B cell (primary cell): ENCODE measurements at regions of chr2 and their contacts with region 1.

Region 1: DNA sequence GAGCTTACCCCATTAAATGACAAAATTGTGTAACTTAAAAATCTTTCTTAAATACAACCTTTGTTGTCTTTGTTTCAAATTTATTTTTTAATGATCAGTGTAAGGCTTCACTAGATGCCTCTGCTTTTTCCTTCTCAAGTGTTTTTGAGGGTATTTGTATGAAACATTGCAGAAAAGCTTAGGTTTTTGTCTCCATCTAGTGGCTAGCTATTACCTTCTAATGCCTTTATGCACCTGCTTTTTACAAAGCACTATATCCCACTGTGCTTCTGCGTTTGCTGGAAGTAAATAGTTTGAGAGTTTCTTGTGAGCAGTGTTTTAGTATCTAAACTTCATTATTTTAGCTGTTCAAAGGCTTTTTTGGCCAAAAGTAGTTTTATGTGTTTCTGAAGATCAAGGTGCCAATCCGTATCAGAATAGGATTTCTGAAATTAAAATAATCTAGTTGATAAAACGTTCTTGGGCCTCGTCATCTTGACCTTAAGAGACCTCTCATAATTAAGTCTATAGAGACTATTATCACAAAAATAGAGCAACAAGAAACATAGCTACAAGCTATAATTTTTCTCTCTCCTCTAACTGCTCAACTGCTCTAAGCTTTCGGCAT is 47.0 kb downstream of the IWS1 start:
- DNase-seq: peak; percentile 67
- ATAC-seq: peak; percentile 36
- H3K4me3 ChIP-seq: no peak overlapping the region
- H3K4me3 Mint-ChIP-seq: no peak overlapping the region
- H3K27ac ChIP-seq: no peak overlapping the region
- H3K27ac Mint-ChIP-seq: no peak overlapping the region
- H3K4me1 ChIP-seq: no peaks in the 10 kb centered on the region
- H3K4me1 Mint-ChIP-seq: no peaks in the 10 kb centered on the region
- H3K27me3 ChIP-seq: no peaks in the 10 kb centered on the region
- H3K27me3 Mint-ChIP-seq: no peaks in the 10 kb centered on the region
- CTCF ChIP-seq: peak; percentile 93

Region 2: DNA sequence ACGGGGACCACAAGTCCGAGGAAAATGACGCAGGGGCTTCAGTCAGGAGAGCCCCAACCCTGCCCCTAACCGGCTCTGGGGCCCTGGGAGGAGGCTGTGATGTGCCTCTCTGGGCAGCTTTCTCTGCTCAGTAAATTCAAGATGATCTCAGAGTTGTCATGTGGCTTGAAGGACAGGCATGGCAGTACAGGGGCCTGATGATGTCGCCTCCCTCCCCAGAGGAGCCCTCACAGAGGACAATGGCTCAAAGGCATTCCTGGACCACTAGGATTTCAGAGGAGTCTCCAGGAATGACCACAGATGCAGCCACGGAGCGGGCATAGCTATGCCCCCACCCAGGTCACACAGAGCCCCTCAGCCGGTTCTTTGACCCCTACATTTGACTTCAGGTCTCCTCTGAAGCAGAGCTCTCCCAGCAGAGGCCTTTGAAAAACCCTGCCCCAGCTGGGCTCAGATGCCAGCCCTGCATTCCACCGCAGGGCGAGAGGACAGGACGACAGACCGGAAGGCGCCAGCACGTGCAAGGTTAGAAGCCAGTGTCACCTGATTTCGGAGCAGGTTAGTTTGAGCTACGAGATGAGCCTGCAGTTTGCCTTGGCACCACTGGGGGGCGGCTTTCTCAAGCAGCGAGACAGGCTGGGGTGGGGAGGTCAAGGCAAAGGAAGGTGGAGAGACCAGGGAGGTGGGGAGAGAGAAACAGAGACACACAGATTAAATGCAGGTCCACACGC is 411.5 kb before region 1 on chr2:
- CTCF ChIA-PET with region 1: interaction called, 11 read pairs
- POLR2A ChIA-PET with region 1: no interaction called
- intact Hi-C with region 1: no loop called
- DNase-seq: peak; percentile 78
- ATAC-seq: peak; percentile 72
- H3K4me3 ChIP-seq: no peak overlapping the region
- H3K4me3 Mint-ChIP-seq: no peak overlapping the region
- H3K27ac ChIP-seq: no peak overlapping the region
- H3K27ac Mint-ChIP-seq: peak overlapping the region; percentile 62
- H3K4me1 ChIP-seq: peaks cover 0 to 8% of the 10 kb centered on the region in 2 donors
- H3K4me1 Mint-ChIP-seq: peaks cover 15% of the 10 kb centered on the region
- H3K27me3 ChIP-seq: no peaks in the 10 kb centered on the region
- H3K27me3 Mint-ChIP-seq: no peaks in the 10 kb centered on the region
- CTCF ChIP-seq: peak; percentile 83

Region 3: DNA sequence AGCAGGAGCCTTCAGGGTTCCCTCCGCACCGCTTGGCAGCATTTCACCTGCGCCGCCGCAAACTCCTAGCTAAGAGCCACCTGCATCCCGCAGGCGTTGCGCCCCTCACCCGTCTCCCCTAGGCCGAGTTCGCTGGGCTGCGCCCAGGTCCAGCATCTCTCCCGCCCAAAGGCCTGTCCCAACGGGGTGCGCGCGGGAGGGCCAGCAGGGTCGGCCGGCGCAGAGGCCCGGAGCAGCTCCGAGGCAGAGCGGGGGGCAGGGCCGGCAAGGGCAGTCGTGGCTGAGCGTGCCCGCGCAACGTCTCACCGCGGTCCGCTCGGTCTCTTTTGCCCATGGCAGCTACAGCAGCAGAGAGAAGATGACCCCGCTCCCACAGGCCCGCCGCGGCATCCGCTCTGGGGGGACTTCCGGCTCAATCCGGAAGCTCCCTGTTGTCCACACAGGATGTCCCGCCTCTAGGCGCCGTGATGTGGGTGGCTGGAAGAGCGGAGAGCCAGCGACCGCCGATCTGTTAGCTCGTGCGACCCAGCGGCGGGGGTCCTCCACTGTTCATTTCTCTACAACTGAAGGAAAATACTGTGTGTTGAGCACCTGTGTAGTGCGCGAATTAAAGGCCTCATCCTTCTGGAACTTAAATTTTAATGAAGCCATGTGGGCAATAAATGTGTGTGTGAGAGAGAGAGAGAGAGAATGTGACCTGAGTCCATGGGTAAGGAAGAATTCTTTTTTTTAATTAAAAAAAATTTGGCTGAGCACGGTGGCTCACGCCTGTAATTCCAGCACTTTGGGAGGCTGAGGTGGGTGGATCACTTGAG is 185.4 kb before region 1 on chr2 and contains the start of gene ERCC3:
- CTCF ChIA-PET with region 1: interaction called, 16 read pairs
- POLR2A ChIA-PET with region 1: no interaction called
- intact Hi-C with region 1: no loop called
- DNase-seq: peak; percentile 86
- ATAC-seq: peak; percentile 96
- H3K4me3 ChIP-seq: peak within 1 kb of the TSS; percentile 82 to 97 (median 88)
- H3K4me3 Mint-ChIP-seq: peak within 1 kb of the TSS; percentile 100
- H3K27ac ChIP-seq: peak within 1 kb of the TSS; percentile 46 to 84
- H3K27ac Mint-ChIP-seq: peak within 1 kb of the TSS; percentile 95
- H3K4me1 ChIP-seq: peaks cover 5 to 22% of the 10 kb centered on the region in 2 donors
- H3K4me1 Mint-ChIP-seq: peaks cover 31% of the 10 kb centered on the region
- H3K27me3 ChIP-seq: no peaks in the 10 kb centered on the region
- H3K27me3 Mint-ChIP-seq: no peaks in the 10 kb centered on the region
- CTCF ChIP-seq: no peak
- total RNA-seq, gene ERCC3: 74.8 and 79.3 TPM in 2 replicates

Region 4: GRCh38 chr2:127313406-127313805 is 165.9 kb before region 1 on chr2:
- CTCF ChIA-PET with region 1: interaction called, 23 read pairs
- POLR2A ChIA-PET with region 1: no interaction called
- intact Hi-C with region 1: no loop called
- DNase-seq: peak; percentile 62
- ATAC-seq: peak; percentile 80
- H3K4me3 ChIP-seq: no peak overlapping the region
- H3K4me3 Mint-ChIP-seq: no peak overlapping the region
- H3K27ac ChIP-seq: no peak overlapping the region
- H3K27ac Mint-ChIP-seq: peak overlapping the region; percentile 55
- H3K4me1 ChIP-seq: peaks cover 10 to 14% of the 10 kb centered on the region in 2 donors
- H3K4me1 Mint-ChIP-seq: peaks cover 18% of the 10 kb centered on the region
- H3K27me3 ChIP-seq: no peaks in the 10 kb centered on the region
- H3K27me3 Mint-ChIP-seq: no peaks in the 10 kb centered on the region
- CTCF ChIP-seq: no peak

Region 5: GRCh38 chr2:127330753-127331152 is 148.6 kb before region 1 on chr2:
- CTCF ChIA-PET with region 1: interaction called, 70 read pairs
- POLR2A ChIA-PET with region 1: no interaction called
- intact Hi-C with region 1: no loop called
- DNase-seq: no peak
- ATAC-seq: no peak
- H3K4me3 ChIP-seq: no peak overlapping the region
- H3K4me3 Mint-ChIP-seq: no peak overlapping the region
- H3K27ac ChIP-seq: no peak overlapping the region
- H3K27ac Mint-ChIP-seq: peak overlapping the region; percentile 41
- H3K4me1 ChIP-seq: no peaks in the 10 kb centered on the region
- H3K4me1 Mint-ChIP-seq: peaks cover 3% of the 10 kb centered on the region
- H3K27me3 ChIP-seq: no peaks in the 10 kb centered on the region
- H3K27me3 Mint-ChIP-seq: no peaks in the 10 kb centered on the region
- CTCF ChIP-seq: no peak

Region 6: GRCh38 chr2:127348426-127349000 is 130.8 kb before region 1 on chr2:
- CTCF ChIA-PET with region 1: interaction called, 13 read pairs
- POLR2A ChIA-PET with region 1: no interaction called
- intact Hi-C with region 1: no loop called
- DNase-seq: peak; percentile 14
- ATAC-seq: no peak
- H3K4me3 ChIP-seq: peak overlapping the region in 1 of 5 experiments; percentile 45
- H3K4me3 Mint-ChIP-seq: peak overlapping the region; percentile 69
- H3K27ac ChIP-seq: peak overlapping the region in 1 of 2 donors; percentile 48
- H3K27ac Mint-ChIP-seq: peak overlapping the region; percentile 1
- H3K4me1 ChIP-seq: peaks cover 27 to 52% of the 10 kb centered on the region in 2 donors
- H3K4me1 Mint-ChIP-seq: peaks cover 69% of the 10 kb centered on the region
- H3K27me3 ChIP-seq: no peaks in the 10 kb centered on the region
- H3K27me3 Mint-ChIP-seq: no peaks in the 10 kb centered on the region
- CTCF ChIP-seq: no peak

Region 7: DNA sequence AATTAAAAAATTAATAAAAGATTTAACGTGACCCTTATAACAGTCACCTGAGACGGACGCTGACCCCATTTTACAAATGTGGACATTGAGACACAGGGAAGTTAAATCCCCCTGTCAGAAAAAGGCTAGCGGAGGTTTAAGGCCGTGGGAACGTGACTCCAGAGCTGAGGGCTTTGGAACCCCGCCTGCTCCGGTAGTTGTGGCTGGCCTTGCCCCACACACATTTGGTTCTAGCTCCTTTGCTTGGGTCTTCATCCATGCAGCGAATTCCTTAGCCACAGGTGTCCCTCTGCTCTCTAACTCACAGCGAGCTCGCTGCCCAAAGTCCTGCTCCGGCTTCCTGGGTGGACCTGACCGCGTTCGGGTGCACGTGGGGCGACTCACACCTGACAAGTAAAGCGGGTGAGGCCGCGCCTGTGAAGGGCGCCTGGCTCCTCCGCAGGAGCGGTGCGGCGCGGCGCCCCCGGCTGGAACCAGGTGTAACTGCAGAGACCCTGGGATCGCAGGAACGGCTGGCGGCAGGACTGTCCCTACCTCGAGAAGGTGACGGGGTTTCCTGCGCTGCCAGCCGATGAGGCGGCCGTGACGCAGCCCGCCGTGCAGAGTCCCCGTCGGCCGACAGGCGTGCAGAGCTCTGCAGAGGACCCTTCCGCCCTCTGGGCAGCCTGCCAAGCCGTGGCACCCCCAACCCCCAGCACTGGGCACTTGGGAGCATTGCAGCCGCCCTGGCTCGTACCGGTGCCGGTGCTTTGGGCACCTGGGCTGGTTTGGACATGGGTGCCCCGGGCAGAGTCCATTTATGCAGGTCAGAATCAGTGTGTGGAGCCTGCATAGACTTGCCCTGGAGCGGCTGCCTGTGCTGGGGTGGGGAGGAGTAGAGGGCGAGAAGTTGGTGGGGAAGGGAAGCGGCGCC is 63.5 kb before region 1 on chr2:
- CTCF ChIA-PET with region 1: interaction called, 15 read pairs
- POLR2A ChIA-PET with region 1: no interaction called
- intact Hi-C with region 1: loop called (anchors 2 kb)
- DNase-seq: peak; percentile 88
- ATAC-seq: peak; percentile 89
- H3K4me3 ChIP-seq: peak overlapping the region; percentile 51 to 72 (median 60)
- H3K4me3 Mint-ChIP-seq: peak overlapping the region; percentile 88
- H3K27ac ChIP-seq: no peak overlapping the region
- H3K27ac Mint-ChIP-seq: peak overlapping the region; percentile 65
- H3K4me1 ChIP-seq: peaks cover 31 to 37% of the 10 kb centered on the region in 2 donors
- H3K4me1 Mint-ChIP-seq: peaks cover 52% of the 10 kb centered on the region
- H3K27me3 ChIP-seq: no peaks in the 10 kb centered on the region
- H3K27me3 Mint-ChIP-seq: no peaks in the 10 kb centered on the region
- CTCF ChIP-seq: peak; percentile 90